Mammary epithelial cell (primary cell): ENCODE measurements at regions of chr13 and their contacts with region 1.

Region 1: DNA sequence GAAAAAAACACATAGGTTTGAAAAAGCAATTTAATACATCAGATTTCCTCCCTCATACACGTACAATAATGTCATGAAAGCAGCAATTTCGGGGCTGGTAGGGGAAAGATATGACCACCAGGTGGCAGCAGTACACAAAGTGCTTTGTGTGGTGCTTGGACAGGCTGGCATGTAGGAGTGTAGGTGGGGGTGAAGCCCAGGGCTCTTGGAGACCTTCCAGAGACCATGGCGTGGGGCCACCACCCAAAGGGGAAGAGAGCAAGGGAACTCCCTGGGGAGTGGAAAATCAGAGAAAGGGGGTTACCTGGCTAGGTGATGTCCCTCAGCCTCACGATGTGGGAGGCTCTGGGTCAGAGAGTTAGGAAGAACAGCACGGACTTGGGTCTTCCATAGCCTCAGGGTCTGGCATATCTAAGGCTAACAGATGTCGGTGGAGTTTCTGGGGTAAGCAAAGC is 11.8 kb upstream of the CCNA1 start:
- DNase-seq: peak; percentile 62
- H3K4me3 ChIP-seq: no peak overlapping the region
- H3K27ac ChIP-seq: no peak overlapping the region
- H3K4me1 ChIP-seq: peaks cover 35% of the 10 kb centered on the region
- H3K27me3 ChIP-seq: no peaks in the 10 kb centered on the region
- CTCF ChIP-seq: peak; percentile 89 to 94

Region 2: DNA sequence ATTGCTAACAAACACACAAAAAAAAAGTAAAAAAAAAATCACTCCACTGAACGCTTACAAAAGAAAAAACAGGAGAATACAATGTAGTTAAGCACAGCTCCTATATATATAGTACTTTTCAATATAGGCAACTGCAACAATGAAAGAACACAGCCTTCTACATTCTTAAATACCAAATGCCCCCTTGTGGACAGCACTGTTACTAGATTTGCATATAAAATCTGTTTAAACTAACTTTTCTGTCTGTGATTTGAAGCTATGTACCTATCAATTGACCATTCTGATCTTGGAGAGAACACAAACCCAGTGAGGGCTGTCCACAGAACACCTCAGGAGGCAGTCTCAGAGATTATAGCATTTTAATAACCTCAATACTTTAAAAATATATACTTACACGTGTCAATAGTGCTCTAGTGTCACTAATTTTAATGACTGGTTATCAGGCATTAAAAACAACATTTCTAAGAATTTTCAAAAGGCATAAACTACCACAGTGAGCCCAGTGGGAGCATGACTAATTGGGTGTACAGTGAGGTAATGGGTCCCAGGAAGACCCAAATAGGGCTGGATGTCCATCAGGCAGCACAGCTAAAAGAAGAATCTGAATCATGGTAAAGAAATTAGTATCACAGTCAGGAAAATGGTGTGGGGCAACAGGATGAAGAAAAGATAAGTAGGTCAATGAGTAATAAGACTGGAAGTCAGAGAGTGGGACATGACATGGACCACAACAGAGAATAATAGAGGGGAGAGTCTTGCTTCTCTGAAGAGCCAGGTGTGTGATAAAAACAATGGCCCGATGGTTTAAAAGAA is 145.1 kb before region 1 on chr13:
- CTCF ChIA-PET with region 1: no interaction called
- dilution Hi-C with region 1: no loop called
- in situ Hi-C with region 1: no loop called
- intact Hi-C with region 1: no loop called
- DNase-seq: no peak
- H3K4me3 ChIP-seq: no peak overlapping the region
- H3K27ac ChIP-seq: no peak overlapping the region
- H3K4me1 ChIP-seq: no peaks in the 10 kb centered on the region
- H3K27me3 ChIP-seq: no peaks in the 10 kb centered on the region
- CTCF ChIP-seq: peak; percentile 54 to 63

Region 3: DNA sequence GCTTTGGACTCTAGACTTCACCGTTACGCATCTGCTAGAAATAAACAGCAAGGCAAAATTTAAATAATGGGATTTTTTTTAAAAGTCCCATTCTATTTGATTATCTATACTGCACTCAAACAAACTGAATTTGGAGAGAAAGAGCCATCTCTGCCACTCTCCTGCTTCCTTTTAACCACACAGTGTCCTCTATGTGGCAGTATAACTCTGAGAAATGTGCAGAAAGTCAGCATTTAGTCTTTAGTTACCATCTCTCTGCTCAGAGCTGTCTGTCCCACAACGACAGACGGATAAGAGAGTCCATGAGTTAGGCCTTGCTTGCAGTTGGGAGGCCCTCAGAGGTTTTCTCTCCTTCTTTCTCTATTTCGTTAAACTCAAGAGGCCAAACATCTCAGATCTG is 33.1 kb after region 1 on chr13:
- CTCF ChIA-PET with region 1: no interaction called
- dilution Hi-C with region 1: no loop called
- in situ Hi-C with region 1: no loop called
- intact Hi-C with region 1: no loop called
- DNase-seq: no peak
- H3K4me3 ChIP-seq: no peak overlapping the region
- H3K27ac ChIP-seq: no peak overlapping the region
- H3K4me1 ChIP-seq: peaks cover 11% of the 10 kb centered on the region
- H3K27me3 ChIP-seq: no peaks in the 10 kb centered on the region
- CTCF ChIP-seq: peak; percentile 14 to 48

Region 4: DNA sequence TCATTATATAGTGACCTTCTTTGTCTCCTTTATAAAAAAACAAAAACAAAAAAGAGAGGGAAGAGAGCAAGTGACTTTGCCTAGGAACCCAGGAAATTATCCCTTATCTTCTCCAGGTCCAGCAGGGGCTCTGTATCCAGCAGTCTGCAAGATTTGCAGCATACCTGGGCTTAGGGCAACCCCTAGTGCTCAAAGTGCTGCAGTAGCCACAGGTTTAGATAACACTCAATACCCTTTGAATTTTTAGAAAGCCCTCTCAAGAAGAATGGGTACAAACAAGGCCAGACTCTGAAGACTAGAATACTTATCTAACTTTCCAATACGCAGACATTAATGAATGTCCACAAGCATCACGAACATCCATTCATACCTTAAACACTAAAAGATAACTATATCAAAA is 55.0 kb after region 1 on chr13:
- CTCF ChIA-PET with region 1: interaction called, 5 read pairs
- dilution Hi-C with region 1: no loop called
- in situ Hi-C with region 1: no loop called
- intact Hi-C with region 1: loop called (anchors 1 kb)
- DNase-seq: peak; percentile 45
- H3K4me3 ChIP-seq: no peak overlapping the region
- H3K27ac ChIP-seq: no peak overlapping the region
- H3K4me1 ChIP-seq: no peaks in the 10 kb centered on the region
- H3K27me3 ChIP-seq: no peaks in the 10 kb centered on the region
- CTCF ChIP-seq: peak; percentile 58 to 63

Region 5: DNA sequence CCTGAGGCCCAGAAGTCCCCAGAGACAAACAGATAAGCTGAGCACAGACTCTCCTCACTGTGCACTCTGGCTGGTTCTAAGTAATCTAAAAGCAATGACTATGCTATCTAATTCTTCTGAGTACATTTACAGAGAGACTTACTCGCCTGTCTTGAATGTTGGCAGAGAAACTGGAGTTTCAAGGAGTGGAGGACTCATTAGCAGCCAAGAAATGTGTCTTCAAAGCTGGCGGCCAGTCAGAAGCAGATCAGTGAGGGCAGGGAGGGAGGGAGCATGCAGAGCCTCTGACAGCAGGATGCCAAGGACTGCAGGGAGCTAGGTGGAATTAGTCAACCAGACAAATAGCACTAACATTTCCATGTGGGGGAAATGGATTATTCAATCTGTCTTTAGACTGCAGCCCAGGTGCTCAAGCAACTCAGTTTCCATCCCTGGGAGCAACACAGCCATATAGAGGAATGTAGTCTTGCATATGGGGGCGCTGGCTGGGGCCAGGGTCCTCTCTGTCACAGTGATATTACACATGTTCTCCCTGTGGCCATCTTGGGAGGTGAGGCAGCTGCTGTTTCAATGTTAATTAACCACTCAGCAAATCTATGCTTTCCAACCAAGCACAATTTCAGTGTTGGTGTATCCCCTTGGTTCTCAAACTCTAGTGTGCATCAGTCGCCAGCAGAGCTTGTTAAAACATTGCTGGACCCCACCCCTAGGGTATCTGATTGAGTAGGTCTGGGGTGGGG is 109.8 kb after region 1 on chr13:
- CTCF ChIA-PET with region 1: no interaction called
- dilution Hi-C with region 1: no loop called
- in situ Hi-C with region 1: no loop called
- intact Hi-C with region 1: loop called (anchors 5 kb)
- DNase-seq: peak; percentile 69
- H3K4me3 ChIP-seq: no peak overlapping the region
- H3K27ac ChIP-seq: no peak overlapping the region
- H3K4me1 ChIP-seq: peaks cover 38% of the 10 kb centered on the region
- H3K27me3 ChIP-seq: no peaks in the 10 kb centered on the region
- CTCF ChIP-seq: no peak

Region 6: GRCh38 chr13:36616706-36617105 is 196.2 kb after region 1 on chr13:
- CTCF ChIA-PET with region 1: no interaction called
- dilution Hi-C with region 1: no loop called
- in situ Hi-C with region 1: no loop called
- intact Hi-C with region 1: no loop called
- DNase-seq: no peak
- H3K4me3 ChIP-seq: no peak overlapping the region
- H3K27ac ChIP-seq: no peak overlapping the region
- H3K4me1 ChIP-seq: no peaks in the 10 kb centered on the region
- H3K27me3 ChIP-seq: no peaks in the 10 kb centered on the region
- CTCF ChIP-seq: no peak

Region 7: GRCh38 chr13:36736119-36736726 is 315.8 kb after region 1 on chr13:
- CTCF ChIA-PET with region 1: no interaction called
- dilution Hi-C with region 1: no loop called
- in situ Hi-C with region 1: loop called (anchors 25 kb)
- intact Hi-C with region 1: loop called (anchors 1 kb)
- DNase-seq: peak; percentile 16
- H3K4me3 ChIP-seq: no peak overlapping the region
- H3K27ac ChIP-seq: no peak overlapping the region
- H3K4me1 ChIP-seq: no peaks in the 10 kb centered on the region
- H3K27me3 ChIP-seq: no peaks in the 10 kb centered on the region
- CTCF ChIP-seq: peak; percentile 48 to 65

Region 8: GRCh38 chr13:36818804-36819738 is 398.6 kb after region 1 on chr13 and contains the start of gene RFXAP:
- CTCF ChIA-PET with region 1: no interaction called
- dilution Hi-C with region 1: no loop called
- in situ Hi-C with region 1: no loop called
- intact Hi-C with region 1: loop called (anchors 10 kb)
- DNase-seq: peak; percentile 75
- H3K4me3 ChIP-seq: peak within 1 kb of the TSS; percentile 71 to 90 (median 76)
- H3K27ac ChIP-seq: peak within 1 kb of the TSS; percentile 32
- H3K4me1 ChIP-seq: peaks cover 16% of the 10 kb centered on the region
- H3K27me3 ChIP-seq: no peaks in the 10 kb centered on the region
- CTCF ChIP-seq: no peak
- total RNA-seq, gene RFXAP: 3.3 to 4.4 TPM

Region 9: GRCh38 chr13:36848199-36848982 is 427.9 kb after region 1 on chr13:
- CTCF ChIA-PET with region 1: no interaction called
- dilution Hi-C with region 1: no loop called
- in situ Hi-C with region 1: no loop called
- intact Hi-C with region 1: loop called (anchors 10 kb)
- DNase-seq: no peak
- H3K4me3 ChIP-seq: no peak overlapping the region
- H3K27ac ChIP-seq: no peak overlapping the region
- H3K4me1 ChIP-seq: no peaks in the 10 kb centered on the region
- H3K27me3 ChIP-seq: no peaks in the 10 kb centered on the region
- CTCF ChIP-seq: peak in 1 of 2 donors; percentile 25

Region 10: GRCh38 chr13:37068962-37069361 is 648.5 kb after region 1 on chr13:
- CTCF ChIA-PET with region 1: no interaction called
- dilution Hi-C with region 1: no loop called
- in situ Hi-C with region 1: no loop called
- intact Hi-C with region 1: loop called (anchors 2 kb)
- DNase-seq: no peak
- H3K4me3 ChIP-seq: no peak overlapping the region
- H3K27ac ChIP-seq: no peak overlapping the region
- H3K4me1 ChIP-seq: no peaks in the 10 kb centered on the region
- H3K27me3 ChIP-seq: no peaks in the 10 kb centered on the region
- CTCF ChIP-seq: peak; percentile 18 to 31